ENCODE measurements at regions of chr3 and their contacts with region 1.

Region 1: GRCh38 chr3:46947981-46948791 is 28.4 kb downstream of the CCDC12 start:
- DNase-seq: peak; percentile 90 to 96
- H3K4me3 ChIP-seq: no peak overlapping the region
- H3K4me3 Mint-ChIP-seq: peak overlapping the region; percentile 57
- H3K27ac Mint-ChIP-seq: peak overlapping the region; percentile 95
- H3K4me1 ChIP-seq: peaks cover 64% of the 10 kb centered on the region
- H3K4me1 Mint-ChIP-seq: peaks cover 65% of the 10 kb centered on the region
- H3K27me3 ChIP-seq: no peaks in the 10 kb centered on the region
- H3K27me3 Mint-ChIP-seq: no peaks in the 10 kb centered on the region
- CTCF ChIP-seq: no peak

Region 2: GRCh38 chr3:46965151-46965550 is 17.0 kb after region 1 on chr3:
- CTCF ChIA-PET with region 1: interaction called, 3 read pairs
- POLR2A ChIA-PET with region 1: no interaction called
- intact Hi-C with region 1: loop called (anchors 2 kb)
- DNase-seq: peak in 1 of 2 experiments; percentile 55
- H3K4me3 ChIP-seq: no peak overlapping the region
- H3K4me3 Mint-ChIP-seq: no peak overlapping the region
- H3K27ac Mint-ChIP-seq: peak overlapping the region; percentile 70
- H3K4me1 ChIP-seq: peaks cover 66% of the 10 kb centered on the region
- H3K4me1 Mint-ChIP-seq: peaks cover 49% of the 10 kb centered on the region
- H3K27me3 ChIP-seq: no peaks in the 10 kb centered on the region
- H3K27me3 Mint-ChIP-seq: no peaks in the 10 kb centered on the region
- CTCF ChIP-seq: no peak

Region 3: GRCh38 chr3:46998121-46998851 is 50.1 kb after region 1 on chr3:
- CTCF ChIA-PET with region 1: no interaction called
- POLR2A ChIA-PET with region 1: no interaction called
- intact Hi-C with region 1: loop called (anchors 5 kb)
- DNase-seq: peak; percentile 69 to 84
- H3K4me3 ChIP-seq: no peak overlapping the region
- H3K4me3 Mint-ChIP-seq: no peak overlapping the region
- H3K27ac Mint-ChIP-seq: no peak overlapping the region
- H3K4me1 ChIP-seq: peaks cover 11% of the 10 kb centered on the region
- H3K4me1 Mint-ChIP-seq: peaks cover 6% of the 10 kb centered on the region
- H3K27me3 ChIP-seq: no peaks in the 10 kb centered on the region
- H3K27me3 Mint-ChIP-seq: no peaks in the 10 kb centered on the region
- CTCF ChIP-seq: peak; percentile 76 to 85

Region 4: GRCh38 chr3:47250309-47251060 is 302.3 kb after region 1 on chr3:
- CTCF ChIA-PET with region 1: no interaction called
- POLR2A ChIA-PET with region 1: no interaction called
- intact Hi-C with region 1: no loop called
- DNase-seq: peak; percentile 62
- H3K4me3 ChIP-seq: no peak overlapping the region
- H3K4me3 Mint-ChIP-seq: no peak overlapping the region
- H3K27ac Mint-ChIP-seq: no peak overlapping the region
- H3K4me1 ChIP-seq: no peaks in the 10 kb centered on the region
- H3K4me1 Mint-ChIP-seq: no peaks in the 10 kb centered on the region
- H3K27me3 ChIP-seq: no peaks in the 10 kb centered on the region
- H3K27me3 Mint-ChIP-seq: no peaks in the 10 kb centered on the region
- CTCF ChIP-seq: peak; percentile 52 to 56

Measured in Caco-2 (cell line).